Transverse colon (tissue), 4 donors: ENCODE measurements at regions of chr21 and their contacts with region 1.

Region 1: DNA sequence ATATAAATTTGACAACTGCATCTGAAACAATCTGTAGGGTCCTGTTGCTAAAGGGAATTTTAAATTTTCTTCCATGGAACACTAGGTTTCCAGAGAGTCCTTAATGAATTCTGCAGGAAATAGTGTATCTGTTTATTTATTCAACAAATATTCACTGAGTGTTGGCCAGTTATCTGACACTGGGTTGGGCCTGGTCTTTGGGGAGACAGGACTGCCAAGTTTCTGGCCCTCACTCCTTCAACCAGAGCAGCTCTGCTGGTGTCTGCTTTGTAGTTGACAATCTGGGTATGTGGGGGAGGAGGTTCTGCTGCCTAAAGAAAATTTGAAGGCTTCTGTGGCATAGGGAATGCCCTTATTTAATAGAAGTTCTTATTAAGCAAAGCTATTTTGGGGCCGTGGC is 26.1 kb upstream of the HUNK start:
- DNase-seq: no peak
- H3K4me3 ChIP-seq: no peak overlapping the region
- H3K27ac ChIP-seq: no peak overlapping the region
- H3K4me1 ChIP-seq: no peaks in the 10 kb centered on the region
- H3K27me3 ChIP-seq: no peaks in the 10 kb centered on the region
- CTCF ChIP-seq: no peak
- EP300 ChIP-seq: no peak
- POLR2A ChIP-seq: no peak

Region 2: DNA sequence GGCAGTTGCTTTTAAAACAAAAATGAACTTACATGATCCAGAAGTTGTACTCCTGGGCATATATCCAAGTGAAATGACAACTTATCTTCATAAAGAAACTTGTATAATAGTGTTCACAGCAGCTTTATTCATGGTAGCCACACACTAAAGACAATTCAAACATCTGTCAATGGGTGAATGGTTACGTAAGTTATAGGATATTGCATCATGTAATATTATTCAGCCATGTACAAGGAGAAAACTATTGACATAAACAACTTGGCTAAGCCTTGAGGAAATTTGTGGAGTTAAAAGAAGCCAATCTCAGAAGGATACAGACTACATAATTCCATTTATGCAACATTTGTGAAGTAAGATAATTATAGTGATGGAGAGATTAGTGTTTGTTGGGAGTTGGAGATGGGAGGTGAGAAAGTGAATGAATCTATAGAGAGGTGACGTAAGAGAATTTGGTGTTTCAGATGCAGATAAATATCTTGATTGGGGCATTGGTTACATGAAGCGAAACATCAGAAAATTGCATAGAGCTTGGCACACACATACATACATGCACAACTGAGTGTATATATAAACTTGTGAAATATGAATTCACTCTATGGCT is 1857.0 kb before region 1 on chr21:
- in situ Hi-C with region 1: no loop called
- intact Hi-C with region 1: loop called (anchors 10 kb)
- DNase-seq: no peak
- H3K4me3 ChIP-seq: no peak overlapping the region
- H3K27ac ChIP-seq: no peak overlapping the region
- H3K4me1 ChIP-seq: no peaks in the 10 kb centered on the region
- H3K27me3 ChIP-seq: no peaks in the 10 kb centered on the region
- CTCF ChIP-seq: no peak
- EP300 ChIP-seq: no peak
- POLR2A ChIP-seq: no peak

Region 3: DNA sequence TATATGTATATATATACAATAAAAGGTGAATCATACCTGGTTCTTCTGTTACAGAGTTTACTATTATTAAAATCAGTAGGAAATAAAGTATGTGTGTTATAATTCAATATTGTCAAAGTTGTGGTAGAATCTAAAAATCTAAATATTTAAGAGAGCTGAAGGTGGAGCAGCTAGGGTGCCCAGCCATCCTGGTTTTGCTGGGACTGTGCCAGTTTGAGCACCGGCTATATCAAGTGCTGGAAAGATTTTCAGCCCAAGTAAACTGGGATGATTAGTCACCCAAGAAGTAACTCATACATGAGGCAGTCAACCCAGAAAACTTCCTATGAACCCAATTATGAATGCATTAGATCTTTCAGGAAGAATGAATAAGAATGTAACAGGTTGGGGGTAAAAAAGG is 1327.8 kb before region 1 on chr21:
- in situ Hi-C with region 1: no loop called
- intact Hi-C with region 1: no loop called
- DNase-seq: no peak
- H3K4me3 ChIP-seq: no peak overlapping the region
- H3K27ac ChIP-seq: no peak overlapping the region
- H3K4me1 ChIP-seq: no peaks in the 10 kb centered on the region
- H3K27me3 ChIP-seq: no peaks in the 10 kb centered on the region
- CTCF ChIP-seq: no peak
- EP300 ChIP-seq: no peak
- POLR2A ChIP-seq: no peak

Region 4: DNA sequence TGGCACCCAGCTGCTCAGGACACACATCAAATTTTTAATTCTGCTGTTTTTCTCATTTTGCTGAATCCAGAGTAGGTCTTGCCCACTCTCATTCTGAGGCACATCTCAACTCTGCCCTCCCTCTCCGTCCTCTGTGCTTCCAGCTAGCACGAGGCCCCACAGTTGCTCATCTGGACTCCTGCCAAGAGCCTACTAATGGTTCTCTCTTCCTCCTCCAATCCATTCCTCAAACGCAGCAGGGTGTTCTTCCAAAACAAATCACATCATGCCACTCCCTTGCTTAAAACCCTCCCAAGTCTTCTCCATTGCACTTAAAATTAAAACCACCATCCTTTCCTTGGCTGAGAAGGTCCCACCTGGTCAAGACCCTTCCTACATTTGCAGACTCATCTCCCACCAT is 65.0 kb before region 1 on chr21:
- in situ Hi-C with region 1: no loop called
- intact Hi-C with region 1: loop called (anchors 2 kb)
- DNase-seq: no peak
- H3K4me3 ChIP-seq: no peak overlapping the region
- H3K27ac ChIP-seq: no peak overlapping the region
- H3K4me1 ChIP-seq: peaks cover 0 to 6% (median 0%) of the 10 kb centered on the region in 4 donors
- H3K27me3 ChIP-seq: no peaks in the 10 kb centered on the region
- CTCF ChIP-seq: no peak
- EP300 ChIP-seq: no peak
- POLR2A ChIP-seq: no peak